ENCODE measurements at regions of chr3 and their contacts with region 1.

Region 1: DNA sequence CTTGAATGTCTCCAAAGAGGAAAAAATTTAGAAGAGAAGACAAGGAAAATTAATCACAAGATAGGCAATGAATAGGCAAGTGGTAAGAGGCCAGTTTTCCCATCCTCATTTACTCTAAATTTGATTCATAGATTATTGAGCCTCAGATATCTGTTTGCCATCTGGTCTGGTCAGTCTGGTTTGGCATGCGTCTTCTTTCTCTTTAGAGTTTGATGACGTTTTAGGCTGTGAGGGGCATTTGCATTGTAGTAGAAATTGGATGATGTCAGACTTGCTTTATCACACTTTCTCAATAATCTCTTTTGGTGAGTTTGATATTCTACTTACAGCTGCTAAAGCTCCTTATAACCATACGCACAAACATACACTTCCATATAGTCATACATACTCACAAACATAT is 428.0 kb upstream of the TPRG1 start:
- DNase-seq: no peak
- ATAC-seq: no peak
- H3K4me3 ChIP-seq: no peak overlapping the region
- H3K27ac ChIP-seq: no peak overlapping the region
- H3K4me1 ChIP-seq: peaks cover 23% of the 10 kb centered on the region
- H3K27me3 ChIP-seq: no peaks in the 10 kb centered on the region
- CTCF ChIP-seq: no peak

Region 2: DNA sequence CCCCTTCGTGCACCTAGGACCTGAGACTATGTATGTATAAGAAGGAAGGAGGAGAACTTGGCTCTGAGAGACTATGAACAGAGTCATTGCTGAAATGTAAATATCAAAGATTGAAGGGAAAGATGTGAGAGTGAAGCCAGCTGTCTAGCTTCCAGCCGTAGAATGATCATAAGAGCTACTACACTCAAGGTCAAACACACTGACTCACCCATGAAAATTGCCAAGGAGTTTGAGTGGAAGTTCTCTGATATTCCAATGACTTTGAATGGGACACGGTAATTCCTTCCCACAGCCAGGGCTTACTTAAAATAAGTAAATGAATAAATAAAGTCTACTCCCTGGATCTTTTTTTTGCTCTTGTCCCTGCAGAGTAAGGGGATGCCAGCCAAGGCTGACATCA is 29.1 kb after region 1 on chr3:
- intact Hi-C with region 1: loop called in 1 of 2 experiments (anchors 1 kb)
- DNase-seq: no peak
- ATAC-seq: peak in 3 of 4 donors; percentile 59 to 70 (median 60)
- H3K4me3 ChIP-seq: no peak overlapping the region
- H3K27ac ChIP-seq: no peak overlapping the region
- H3K4me1 ChIP-seq: peaks cover 24% of the 10 kb centered on the region
- H3K27me3 ChIP-seq: no peaks in the 10 kb centered on the region
- CTCF ChIP-seq: no peak

Region 3: DNA sequence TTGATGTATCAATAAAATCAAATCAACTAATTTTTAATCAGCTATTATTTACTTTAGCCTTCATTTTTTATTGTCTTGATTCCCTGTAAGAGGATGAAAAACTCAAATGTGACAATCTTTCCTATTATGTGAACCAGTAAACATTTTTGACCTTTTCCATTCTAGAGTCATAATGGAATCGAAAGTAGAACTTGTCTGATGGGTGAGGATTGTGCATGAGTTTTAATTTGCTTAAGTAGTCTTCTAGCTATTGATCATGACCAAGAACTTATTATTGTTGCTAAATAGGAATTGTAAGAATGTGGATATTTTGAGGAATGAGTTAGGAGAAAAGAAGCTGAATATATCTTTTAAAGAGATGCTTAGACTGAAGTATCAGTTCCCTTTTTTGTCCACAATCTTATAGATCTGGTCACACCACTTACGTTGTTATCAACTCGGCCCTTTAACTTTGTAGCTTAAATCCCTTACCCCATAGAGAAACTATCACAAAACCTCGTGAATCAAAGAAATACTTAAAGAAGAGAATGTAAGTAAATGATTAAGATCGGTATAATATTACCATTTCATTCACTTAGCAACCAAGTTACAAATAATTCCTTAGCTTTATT is 1034.7 kb after region 1 on chr3:
- intact Hi-C with region 1: no loop called
- DNase-seq: no peak
- ATAC-seq: no peak
- H3K4me3 ChIP-seq: no peak overlapping the region
- H3K27ac ChIP-seq: peak overlapping the region; percentile 90
- H3K4me1 ChIP-seq: peaks cover 41% of the 10 kb centered on the region
- H3K27me3 ChIP-seq: no peaks in the 10 kb centered on the region
- CTCF ChIP-seq: no peak

Measured in psoas muscle (tissue), 8 donors.